ENCODE measurements at regions of chr11 and their contacts with region 1.

Region 1: GRCh38 chr11:62419314-62419929 is 589 bp downstream of the SCGB1A1 start:
- DNase-seq: no peak
- H3K4me3 ChIP-seq: no peak overlapping the region
- CTCF ChIP-seq: no peak

Region 2: GRCh38 chr11:62103141-62103540 is 316.3 kb before region 1 on chr11:
- CTCF ChIA-PET with region 1: no interaction called
- POLR2A ChIA-PET with region 1: no interaction called
- DNase-seq: no peak
- H3K4me3 ChIP-seq: no peak overlapping the region
- CTCF ChIP-seq: no peak

Region 3: GRCh38 chr11:62353844-62354243 is 65.6 kb before region 1 on chr11:
- CTCF ChIA-PET with region 1: no interaction called
- POLR2A ChIA-PET with region 1: no interaction called
- DNase-seq: no peak
- H3K4me3 ChIP-seq: no peak overlapping the region
- CTCF ChIP-seq: no peak

Region 4: GRCh38 chr11:62435846-62436660 is 16.6 kb after region 1 on chr11:
- CTCF ChIA-PET with region 1: interaction called, 28 read pairs
- POLR2A ChIA-PET with region 1: no interaction called
- DNase-seq: no peak
- H3K4me3 ChIP-seq: no peak overlapping the region
- CTCF ChIP-seq: no peak

Region 5: GRCh38 chr11:62444236-62444833 is 24.9 kb after region 1 on chr11:
- CTCF ChIA-PET with region 1: interaction called, 17 read pairs
- POLR2A ChIA-PET with region 1: no interaction called
- DNase-seq: no peak
- H3K4me3 ChIP-seq: peak overlapping the region; percentile 47
- CTCF ChIP-seq: no peak

Region 6: DNA sequence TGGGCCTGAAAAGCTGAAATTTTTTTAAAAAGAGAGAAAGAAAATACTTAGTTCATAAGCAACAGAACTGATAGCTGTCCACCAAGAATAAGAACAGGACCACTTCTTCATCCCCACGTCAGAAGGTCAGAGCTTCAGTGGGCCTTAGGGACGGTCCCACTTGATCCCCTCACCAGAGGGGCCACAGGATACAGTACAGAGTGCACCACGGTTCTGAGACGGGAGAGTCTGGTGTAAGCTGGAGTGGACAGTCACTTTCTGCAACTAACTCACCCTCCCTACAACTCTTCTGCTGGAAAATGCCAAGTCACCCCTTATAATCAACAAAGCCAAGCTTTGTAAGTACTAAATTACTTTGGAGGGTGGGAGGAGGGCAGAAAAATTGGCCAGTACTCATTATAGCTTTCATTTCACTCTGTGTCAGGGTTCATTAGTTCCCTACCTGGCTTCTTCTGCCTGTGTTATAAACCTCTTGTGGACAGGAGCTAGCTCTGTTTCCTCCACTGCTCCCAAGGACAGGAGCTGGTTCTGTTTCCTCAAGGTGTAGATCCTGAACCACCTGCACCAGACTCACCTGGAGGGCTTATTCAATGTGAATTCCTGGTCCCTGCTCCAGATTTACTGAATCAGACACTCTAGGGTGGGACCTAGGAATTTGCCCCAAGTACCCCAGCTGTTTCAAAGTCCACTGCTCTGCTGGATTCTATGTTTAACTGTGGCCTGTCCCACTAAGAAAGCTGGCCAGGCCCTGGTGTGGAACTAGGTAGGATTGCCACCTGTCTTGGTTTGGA is 39.0 kb after region 1 on chr11:
- CTCF ChIA-PET with region 1: interaction called, 11 read pairs
- POLR2A ChIA-PET with region 1: no interaction called
- DNase-seq: no peak
- H3K4me3 ChIP-seq: no peak overlapping the region
- CTCF ChIP-seq: no peak

Region 7: GRCh38 chr11:62922658-62923431 is 503.4 kb after region 1 on chr11:
- CTCF ChIA-PET with region 1: no interaction called
- POLR2A ChIA-PET with region 1: no interaction called
- DNase-seq: no peak
- H3K4me3 ChIP-seq: no peak overlapping the region; the same call in 1 of the 2 replicates
- CTCF ChIP-seq: peak; percentile 53